ENCODE measurements at regions of chr10 and their contacts with region 1.

Region 1: DNA sequence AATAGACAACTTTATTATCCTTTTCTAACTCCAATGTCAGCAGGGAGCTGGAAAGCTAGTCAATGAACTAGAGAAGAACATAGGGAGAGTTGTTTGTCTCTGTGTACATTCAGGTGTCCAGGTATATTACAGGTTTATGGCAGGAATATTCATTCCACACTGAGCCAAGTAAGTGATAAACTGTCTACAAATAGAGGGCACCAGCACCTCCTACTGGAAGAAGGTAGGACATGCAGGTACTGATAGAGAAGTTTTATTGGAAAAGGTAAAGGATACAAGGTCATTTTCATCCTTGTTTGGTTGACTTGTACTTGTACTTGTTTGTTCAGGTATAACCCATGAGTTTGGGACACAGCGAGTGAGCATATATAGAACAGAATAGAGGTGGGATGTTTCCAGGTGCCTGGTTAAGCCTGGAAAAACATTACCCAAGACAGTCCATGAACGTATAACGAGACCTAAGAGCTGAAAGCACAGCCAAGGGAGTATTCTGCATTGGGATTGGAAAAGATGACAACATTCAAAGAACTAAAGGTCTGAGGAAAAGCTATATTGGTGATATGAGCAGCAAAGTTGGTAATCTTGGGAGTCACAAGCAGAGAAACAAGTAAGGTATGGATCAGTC is 61.4 kb upstream of the PPP1R3C start:
- DNase-seq: no peak
- H3K4me3 ChIP-seq: no peak overlapping the region
- H3K27ac ChIP-seq: no peak overlapping the region
- H3K4me1 ChIP-seq: peaks cover 3 to 7% of the 10 kb centered on the region in 2 donors
- H3K27me3 ChIP-seq: no peaks in the 10 kb centered on the region
- CTCF ChIP-seq: peak; percentile 18 to 47 (median 27)

Region 2: GRCh38 chr10:91643700-91644099 is 50.6 kb before region 1 on chr10:
- intact Hi-C with region 1: loop called (anchors 5 kb)
- DNase-seq: no peak
- H3K4me3 ChIP-seq: no peak overlapping the region
- H3K27ac ChIP-seq: peak overlapping the region; percentile 50 to 80
- H3K4me1 ChIP-seq: peaks cover 0 to 14% of the 10 kb centered on the region in 2 donors
- H3K27me3 ChIP-seq: no peaks in the 10 kb centered on the region
- CTCF ChIP-seq: peak in 1 of 3 experiments; percentile 29